HAP-1 (cell line): ENCODE measurements at regions of chr2 and their contacts with region 1.

Region 1: DNA sequence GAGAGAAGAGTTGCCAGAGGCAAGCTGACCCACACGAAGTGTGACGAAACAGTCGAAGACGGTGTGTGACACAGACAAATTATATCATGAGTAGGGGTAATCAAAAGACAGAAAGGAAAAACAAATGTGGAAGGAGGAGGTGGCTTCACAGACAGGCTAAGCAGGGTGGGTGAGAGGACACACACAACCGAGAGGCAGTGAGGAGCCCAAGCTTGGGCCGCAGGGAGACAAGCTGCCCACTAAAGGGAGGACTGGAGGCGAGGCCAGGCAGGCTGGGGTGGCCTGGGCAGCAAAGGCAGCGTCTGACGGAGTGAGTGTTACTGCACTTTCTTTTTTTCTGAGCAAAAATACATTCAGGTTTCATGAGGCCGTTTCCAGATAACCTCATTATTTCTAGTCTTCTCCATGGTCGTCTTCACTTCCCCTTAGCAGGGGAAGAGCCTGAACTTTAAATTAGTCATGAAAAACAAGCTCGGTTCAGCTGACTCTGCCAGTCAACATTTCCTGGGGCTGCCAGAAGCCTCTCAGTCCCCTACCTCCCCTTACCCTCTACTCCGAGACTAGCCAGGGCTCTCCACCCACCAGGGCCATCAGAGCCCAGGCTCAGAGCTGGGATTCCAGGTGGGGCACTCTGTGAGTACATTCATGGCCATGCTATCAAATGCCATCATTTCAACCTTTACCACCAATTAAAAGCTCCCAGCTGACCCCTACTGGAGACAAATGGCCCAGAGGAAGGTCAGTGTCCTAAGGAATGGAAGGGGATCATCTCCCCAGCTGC is 13.8 kb upstream of the ZFP36L2 start:
- DNase-seq: no peak
- H3K4me3 ChIP-seq: no peak overlapping the region
- H3K4me1 ChIP-seq: no peaks in the 10 kb centered on the region
- H3K27me3 ChIP-seq: no peaks in the 10 kb centered on the region

Region 2: DNA sequence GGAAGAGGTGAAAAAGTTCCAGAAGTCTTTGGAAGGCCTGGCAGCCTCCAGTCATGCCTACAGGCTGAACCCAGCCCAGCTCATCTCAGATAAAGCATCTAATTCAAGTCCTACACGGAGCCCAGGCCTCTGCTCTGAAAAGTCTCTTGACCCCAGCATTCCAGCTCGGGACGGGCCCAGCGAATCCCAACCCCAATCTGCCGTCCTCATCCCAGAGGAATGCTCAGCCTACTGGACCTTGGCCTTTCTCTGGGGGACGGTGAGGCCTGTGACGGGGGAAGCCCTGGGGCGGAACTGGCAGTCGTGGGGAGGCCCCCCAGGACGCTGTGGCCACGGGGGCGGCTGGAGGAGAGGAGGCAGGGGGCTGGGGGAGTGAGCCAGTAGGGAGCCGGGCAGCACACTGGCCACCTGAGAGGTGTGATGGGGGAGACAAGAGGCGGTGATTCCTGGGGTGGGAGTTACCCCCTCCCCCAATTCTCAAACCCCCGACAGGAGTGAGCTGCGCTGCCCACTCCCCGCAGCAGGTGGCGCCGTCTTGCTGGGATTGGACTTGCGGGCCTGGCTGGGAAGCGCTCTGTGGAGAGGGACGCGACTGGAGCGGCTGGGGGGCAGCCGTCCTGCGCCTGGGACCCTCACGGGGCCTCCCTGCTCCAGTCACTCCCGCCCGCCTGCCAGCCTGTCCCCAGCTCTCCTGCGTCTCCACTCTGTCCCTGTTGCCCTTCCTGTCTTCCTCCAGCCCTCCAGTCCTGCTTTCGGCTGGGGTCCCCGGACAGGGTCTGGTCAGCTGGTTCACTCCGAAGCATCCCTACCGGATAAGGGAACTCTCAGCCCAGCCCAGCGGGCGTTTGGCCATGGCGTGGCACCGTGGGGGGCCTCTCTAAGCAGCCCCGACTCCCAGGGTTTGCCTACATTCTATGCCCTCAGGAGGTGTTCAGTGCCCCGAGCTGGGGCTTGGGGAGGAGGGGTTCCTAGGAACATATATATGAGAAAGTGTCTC is 265.2 kb before region 1 on chr2:
- in situ Hi-C with region 1: loop called (anchors 10 kb)
- DNase-seq: peak; percentile 49 to 87
- H3K4me3 ChIP-seq: peak overlapping the region; percentile 22
- H3K4me1 ChIP-seq: peaks cover 4% of the 10 kb centered on the region; the same call in 1 of the 2 replicates
- H3K27me3 ChIP-seq: no peaks in the 10 kb centered on the region